ENCODE measurements at regions of chr10 and their contacts with region 1.

Region 1: GRCh38 chr10:33330543-33331378 is 3.7 kb downstream of the NRP1 start:
- DNase-seq: peak; percentile 100
- ATAC-seq: peak; percentile 21
- H3K4me3 ChIP-seq: peak overlapping the region; percentile 69
- H3K27ac ChIP-seq: peak overlapping the region; percentile 86
- H3K4me1 ChIP-seq: peaks cover 46% of the 10 kb centered on the region
- H3K27me3 ChIP-seq: no peaks in the 10 kb centered on the region
- CTCF ChIP-seq: peak; percentile 100

Region 2: DNA sequence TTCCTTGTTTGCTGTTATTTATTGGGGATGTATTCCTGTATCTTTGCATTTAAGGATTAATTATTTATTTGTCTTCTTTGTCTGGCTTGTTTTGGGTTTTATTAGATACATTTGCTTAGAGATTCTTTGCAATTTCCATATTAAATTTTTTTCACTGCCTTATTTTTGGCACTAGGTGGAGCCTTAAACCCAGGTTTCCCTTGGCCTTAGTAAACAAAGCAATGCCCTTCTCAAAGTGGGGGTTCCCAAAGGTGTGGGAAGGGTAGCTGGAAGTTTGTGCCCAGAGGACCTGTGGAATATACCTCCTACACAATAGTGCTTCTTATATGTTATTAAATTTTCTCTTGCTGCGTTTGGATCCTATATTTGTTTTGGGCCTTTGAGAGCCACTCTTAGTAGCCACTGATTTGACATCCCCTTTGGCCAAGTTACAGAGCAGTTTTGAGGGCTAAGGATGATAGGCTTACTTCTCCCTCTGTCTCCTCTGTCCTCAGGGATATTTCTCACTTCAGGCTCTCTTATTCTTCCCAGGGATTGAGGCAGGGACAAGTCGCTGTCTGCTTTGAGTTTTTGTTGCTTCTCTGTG is 535.1 kb before region 1 on chr10:
- CTCF ChIA-PET with region 1: no interaction called
- POLR2A ChIA-PET with region 1: no interaction called
- intact Hi-C with region 1: loop called (anchors 5 kb)
- DNase-seq: peak; percentile 73
- ATAC-seq: peak; percentile 73
- H3K4me3 ChIP-seq: no peak overlapping the region
- H3K27ac ChIP-seq: no peak overlapping the region
- H3K4me1 ChIP-seq: no peaks in the 10 kb centered on the region
- H3K27me3 ChIP-seq: no peaks in the 10 kb centered on the region
- CTCF ChIP-seq: peak; percentile 99

Region 3: DNA sequence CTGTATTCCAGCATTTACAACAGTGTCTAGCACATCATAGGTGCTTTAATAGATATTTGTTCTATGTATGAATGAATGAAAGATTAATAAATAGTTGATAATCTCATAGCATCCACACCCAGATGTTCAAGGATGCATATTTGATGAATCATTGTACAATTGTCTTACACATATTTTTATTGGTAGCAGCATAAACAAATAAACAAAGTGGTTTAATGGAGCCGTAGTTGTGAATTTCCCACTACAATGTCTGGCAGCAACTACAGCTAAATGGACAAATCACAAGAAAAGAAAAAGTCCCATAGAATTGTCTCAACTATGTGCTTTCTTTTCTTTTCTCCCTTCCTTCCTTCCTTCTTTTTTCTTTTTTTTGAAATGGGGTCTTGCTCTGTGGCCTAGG is 147.1 kb before region 1 on chr10:
- CTCF ChIA-PET with region 1: no interaction called
- POLR2A ChIA-PET with region 1: no interaction called
- intact Hi-C with region 1: no loop called
- DNase-seq: peak; percentile 91
- ATAC-seq: peak; percentile 35
- H3K4me3 ChIP-seq: no peak overlapping the region
- H3K27ac ChIP-seq: peak overlapping the region; percentile 1; the same call in 1 of the 2 replicates
- H3K4me1 ChIP-seq: peaks cover 31% of the 10 kb centered on the region
- H3K27me3 ChIP-seq: no peaks in the 10 kb centered on the region
- CTCF ChIP-seq: no peak

Region 4: GRCh38 chr10:33248638-33249037 is 82.1 kb before region 1 on chr10:
- CTCF ChIA-PET with region 1: no interaction called
- POLR2A ChIA-PET with region 1: interaction called, 34 read pairs
- intact Hi-C with region 1: loop called (anchors 2 kb)
- DNase-seq: peak; percentile 100
- ATAC-seq: peak; percentile 43
- H3K4me3 ChIP-seq: no peak overlapping the region
- H3K27ac ChIP-seq: peak overlapping the region; percentile 65
- H3K4me1 ChIP-seq: peaks cover 52% of the 10 kb centered on the region
- H3K27me3 ChIP-seq: no peaks in the 10 kb centered on the region
- CTCF ChIP-seq: no peak

Region 5: DNA sequence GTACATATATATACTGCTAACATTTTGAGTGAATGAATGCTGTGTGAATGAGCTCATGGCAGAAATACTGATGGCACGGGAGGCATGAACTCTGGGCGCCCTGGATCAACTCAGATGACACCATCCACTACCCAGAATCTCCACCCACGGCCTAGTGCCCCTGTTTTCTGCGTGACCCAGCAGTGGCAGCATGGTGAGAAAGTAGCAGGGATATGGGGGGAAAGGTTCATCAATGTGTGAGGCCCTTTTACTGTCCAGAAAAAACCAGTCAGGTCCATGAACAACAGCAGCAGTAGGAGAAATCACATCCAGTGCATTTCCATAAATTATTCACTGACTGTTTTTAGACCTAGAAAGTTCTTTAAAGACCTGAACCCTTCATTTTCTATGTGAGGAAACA is 394.7 kb after region 1 on chr10:
- CTCF ChIA-PET with region 1: no interaction called
- POLR2A ChIA-PET with region 1: interaction called, 15 read pairs
- intact Hi-C with region 1: no loop called
- DNase-seq: no peak
- ATAC-seq: no peak
- H3K4me3 ChIP-seq: no peak overlapping the region
- H3K27ac ChIP-seq: no peak overlapping the region
- H3K4me1 ChIP-seq: peaks cover 12% of the 10 kb centered on the region
- H3K27me3 ChIP-seq: no peaks in the 10 kb centered on the region
- CTCF ChIP-seq: no peak

Region 6: GRCh38 chr10:33939892-33940291 is 609.1 kb after region 1 on chr10:
- CTCF ChIA-PET with region 1: no interaction called
- POLR2A ChIA-PET with region 1: interaction called, 9 read pairs
- intact Hi-C with region 1: loop called (anchors 10 kb)
- DNase-seq: peak; percentile 39
- ATAC-seq: no peak
- H3K4me3 ChIP-seq: no peak overlapping the region
- H3K27ac ChIP-seq: no peak overlapping the region
- H3K4me1 ChIP-seq: peaks cover 7% of the 10 kb centered on the region
- H3K27me3 ChIP-seq: no peaks in the 10 kb centered on the region
- CTCF ChIP-seq: peak; percentile 28; the same call in 1 of the 2 replicates

Region 7: GRCh38 chr10:34156781-34157425 is 826.1 kb after region 1 on chr10:
- CTCF ChIA-PET with region 1: interaction called, 3 read pairs
- POLR2A ChIA-PET with region 1: no interaction called
- intact Hi-C with region 1: loop called (anchors 5 kb)
- DNase-seq: peak; percentile 95
- ATAC-seq: peak; percentile 96
- H3K4me3 ChIP-seq: no peak overlapping the region
- H3K27ac ChIP-seq: peak overlapping the region; percentile 46
- H3K4me1 ChIP-seq: peaks cover 22% of the 10 kb centered on the region
- H3K27me3 ChIP-seq: no peaks in the 10 kb centered on the region
- CTCF ChIP-seq: peak; percentile 73

Region 8: DNA sequence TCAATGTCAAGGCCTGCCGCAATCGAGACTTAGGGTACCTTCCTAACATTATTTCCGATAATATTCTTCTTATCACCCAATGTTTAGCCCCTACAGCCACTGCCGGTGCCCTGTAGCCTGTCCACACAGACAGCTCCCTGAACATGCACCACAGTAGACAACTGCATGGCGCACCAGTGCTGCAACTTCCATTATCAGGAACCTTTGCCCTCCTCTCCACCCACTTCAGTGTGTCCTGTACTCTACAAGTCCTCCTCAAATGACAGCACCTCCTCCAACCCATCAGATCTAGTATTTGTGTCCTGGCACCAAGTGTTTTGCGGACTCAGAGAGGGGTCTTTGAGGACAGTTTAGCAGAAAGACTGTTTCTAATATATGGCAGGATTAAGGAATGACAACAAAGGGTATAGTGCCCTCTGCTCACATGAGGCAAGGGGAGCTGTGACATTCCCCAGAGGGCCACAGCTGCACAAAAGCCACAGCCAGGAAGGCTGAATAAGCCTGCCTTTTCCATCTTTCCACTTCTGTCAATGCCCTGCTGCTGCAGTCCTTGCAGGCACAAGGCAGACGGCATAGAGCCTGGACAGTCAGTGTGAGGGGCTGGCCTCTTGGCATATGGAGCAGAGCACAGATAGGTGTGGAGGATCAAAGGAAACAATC is 1148.9 kb after region 1 on chr10:
- CTCF ChIA-PET with region 1: no interaction called
- POLR2A ChIA-PET with region 1: interaction called, 3 read pairs
- intact Hi-C with region 1: loop called (anchors 1 kb)
- DNase-seq: no peak
- ATAC-seq: no peak
- H3K4me3 ChIP-seq: no peak overlapping the region
- H3K27ac ChIP-seq: no peak overlapping the region
- H3K4me1 ChIP-seq: peaks cover 18% of the 10 kb centered on the region
- H3K27me3 ChIP-seq: no peaks in the 10 kb centered on the region
- CTCF ChIP-seq: no peak

Measured in PC-3 (cell line).